ENCODE measurements at regions of chr1 and their contacts with region 1.

Region 1: GRCh38 chr1:7752512-7753417 is 18.3 kb upstream of the VAMP3 start:
- DNase-seq: peak in 8 of 9 experiments; percentile 16 to 72 (median 54)
- ATAC-seq: no peak
- H3K4me3 ChIP-seq: no peak overlapping the region
- H3K4me3 Mint-ChIP-seq: peak overlapping the region; percentile 27
- H3K27ac ChIP-seq: no peak overlapping the region
- H3K27ac Mint-ChIP-seq: no peak overlapping the region
- H3K4me1 ChIP-seq: no peaks in the 10 kb centered on the region
- H3K4me1 Mint-ChIP-seq: peaks cover 19% of the 10 kb centered on the region
- H3K27me3 ChIP-seq: no peaks in the 10 kb centered on the region
- H3K27me3 Mint-ChIP-seq: peaks cover 2% of the 10 kb centered on the region
- CTCF ChIP-seq: peak; percentile 90

Region 2: DNA sequence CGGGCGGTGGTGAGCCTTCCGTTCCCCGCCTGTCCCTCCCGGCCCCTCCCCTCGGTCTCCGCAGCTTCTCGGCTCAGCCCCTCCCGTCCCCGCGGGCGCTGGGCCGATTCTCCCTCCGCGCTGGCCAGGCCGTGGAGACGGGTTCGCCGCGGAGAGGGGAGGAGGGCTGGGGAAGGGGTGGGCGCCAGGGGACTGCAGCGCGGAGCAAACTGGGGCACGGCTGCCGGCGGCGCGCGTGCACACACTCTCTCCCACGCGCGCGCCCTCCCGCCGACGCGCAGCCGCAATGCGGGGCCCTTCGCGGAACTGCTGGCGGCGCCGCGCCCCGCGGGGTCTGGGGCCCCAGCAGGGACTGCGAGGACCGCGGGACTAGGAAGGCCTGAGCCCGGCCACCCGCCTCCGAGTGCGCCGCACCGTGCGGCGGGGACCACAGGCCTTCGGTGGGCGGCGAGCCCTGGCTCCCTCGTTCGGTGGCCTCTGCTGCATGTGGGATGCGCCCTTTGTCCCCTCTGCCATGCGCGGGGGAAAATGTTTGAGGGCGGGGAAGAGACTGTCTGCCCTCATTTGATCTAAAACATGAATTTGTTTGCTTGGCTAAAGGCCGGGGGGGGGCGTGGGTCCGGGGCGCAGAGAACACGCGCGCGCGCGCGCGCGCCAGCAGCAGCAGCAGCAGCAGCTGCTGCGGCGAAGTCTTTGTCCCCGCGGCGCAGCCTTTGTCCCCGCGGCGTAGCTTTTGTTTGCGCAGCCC is 72.4 kb before region 1 on chr1:
- CTCF ChIA-PET with region 1: interaction called, 447 read pairs
- POLR2A ChIA-PET with region 1: no interaction called
- intact Hi-C with region 1: no loop called
- DNase-seq: peak in 8 of 9 experiments; percentile 24 to 69 (median 47)
- ATAC-seq: peak; percentile 66
- H3K4me3 ChIP-seq: peak overlapping the region; percentile 45 to 80
- H3K4me3 Mint-ChIP-seq: peak overlapping the region; percentile 77
- H3K27ac ChIP-seq: peak overlapping the region in 1 of 2 experiments; percentile 47
- H3K27ac Mint-ChIP-seq: no peak overlapping the region
- H3K4me1 ChIP-seq: peaks cover 5% of the 10 kb centered on the region
- H3K4me1 Mint-ChIP-seq: no peaks in the 10 kb centered on the region
- H3K27me3 ChIP-seq: no peaks in the 10 kb centered on the region
- H3K27me3 Mint-ChIP-seq: peaks cover under 1% of the 10 kb centered on the region
- CTCF ChIP-seq: no peak

Region 3: GRCh38 chr1:7770997-7771822 is 18.4 kb after region 1 on chr1 and contains the start of gene VAMP3:
- CTCF ChIA-PET with region 1: interaction called, 17 read pairs
- POLR2A ChIA-PET with region 1: no interaction called
- intact Hi-C with region 1: no loop called
- DNase-seq: peak; percentile 71 to 92 (median 87)
- ATAC-seq: peak; percentile 96
- H3K4me3 ChIP-seq: peak within 1 kb of the TSS; percentile 68 to 80
- H3K4me3 Mint-ChIP-seq: peak within 1 kb of the TSS; percentile 88
- H3K27ac ChIP-seq: peak within 1 kb of the TSS; percentile 60 to 74
- H3K27ac Mint-ChIP-seq: peak within 1 kb of the TSS; percentile 91
- H3K4me1 ChIP-seq: peaks cover 9% of the 10 kb centered on the region
- H3K4me1 Mint-ChIP-seq: peaks cover 42% of the 10 kb centered on the region
- H3K27me3 ChIP-seq: no peaks in the 10 kb centered on the region
- H3K27me3 Mint-ChIP-seq: peaks cover 4% of the 10 kb centered on the region
- CTCF ChIP-seq: no peak
- total RNA-seq, gene VAMP3: 76.2 to 88.1 TPM

Region 4: DNA sequence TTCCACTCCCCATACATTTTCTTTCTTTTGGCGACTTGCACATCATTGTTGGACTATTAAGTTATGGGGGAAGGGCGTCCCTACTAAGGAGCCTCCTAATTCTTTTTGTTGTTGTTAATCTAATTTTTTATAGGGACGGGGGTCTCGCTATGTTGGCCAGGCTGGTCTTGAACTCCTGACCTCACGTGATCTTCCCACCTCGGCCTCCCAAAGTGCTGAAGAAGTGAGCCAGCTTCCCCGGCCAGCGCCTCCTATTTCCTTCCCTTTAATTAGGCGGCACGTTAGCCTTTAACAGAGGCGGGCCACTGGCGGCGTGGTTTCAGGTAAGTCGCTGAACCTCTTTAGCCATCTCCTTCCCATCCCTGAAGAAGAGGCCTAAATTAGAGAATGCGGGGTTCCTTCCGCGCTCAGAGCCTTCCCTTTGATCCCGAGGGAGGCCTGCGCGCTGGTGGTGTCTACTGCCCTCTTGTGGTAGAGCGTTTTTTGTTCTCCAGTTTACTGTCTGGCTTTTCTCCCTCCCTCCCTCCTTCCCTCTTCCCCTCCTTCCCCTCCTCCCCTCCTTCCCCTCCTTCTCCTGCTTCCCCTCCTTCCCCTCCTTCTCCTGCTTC is 149.8 kb after region 1 on chr1:
- CTCF ChIA-PET with region 1: interaction called, 12 read pairs
- POLR2A ChIA-PET with region 1: no interaction called
- intact Hi-C with region 1: no loop called
- DNase-seq: peak in 8 of 9 experiments; percentile 31 to 84 (median 60)
- ATAC-seq: peak; percentile 69
- H3K4me3 ChIP-seq: peak overlapping the region; percentile 39 to 46
- H3K4me3 Mint-ChIP-seq: peak overlapping the region; percentile 65
- H3K27ac ChIP-seq: no peak overlapping the region
- H3K27ac Mint-ChIP-seq: no peak overlapping the region
- H3K4me1 ChIP-seq: peaks cover 4% of the 10 kb centered on the region
- H3K4me1 Mint-ChIP-seq: peaks cover 9% of the 10 kb centered on the region
- H3K27me3 ChIP-seq: no peaks in the 10 kb centered on the region
- H3K27me3 Mint-ChIP-seq: no peaks in the 10 kb centered on the region
- CTCF ChIP-seq: peak; percentile 53

Region 5: GRCh38 chr1:8104278-8105236 is 351.8 kb after region 1 on chr1:
- CTCF ChIA-PET with region 1: no interaction called
- POLR2A ChIA-PET with region 1: no interaction called
- intact Hi-C with region 1: no loop called
- DNase-seq: peak in 1 of 9 experiments; percentile 23
- ATAC-seq: no peak
- H3K4me3 ChIP-seq: no peak overlapping the region
- H3K4me3 Mint-ChIP-seq: no peak overlapping the region
- H3K27ac ChIP-seq: no peak overlapping the region
- H3K27ac Mint-ChIP-seq: no peak overlapping the region
- H3K4me1 ChIP-seq: no peaks in the 10 kb centered on the region
- H3K4me1 Mint-ChIP-seq: no peaks in the 10 kb centered on the region
- H3K27me3 ChIP-seq: no peaks in the 10 kb centered on the region
- H3K27me3 Mint-ChIP-seq: peaks cover 5% of the 10 kb centered on the region
- CTCF ChIP-seq: no peak